ENCODE measurements at regions of chr18 and their contacts with region 1.

Region 1: DNA sequence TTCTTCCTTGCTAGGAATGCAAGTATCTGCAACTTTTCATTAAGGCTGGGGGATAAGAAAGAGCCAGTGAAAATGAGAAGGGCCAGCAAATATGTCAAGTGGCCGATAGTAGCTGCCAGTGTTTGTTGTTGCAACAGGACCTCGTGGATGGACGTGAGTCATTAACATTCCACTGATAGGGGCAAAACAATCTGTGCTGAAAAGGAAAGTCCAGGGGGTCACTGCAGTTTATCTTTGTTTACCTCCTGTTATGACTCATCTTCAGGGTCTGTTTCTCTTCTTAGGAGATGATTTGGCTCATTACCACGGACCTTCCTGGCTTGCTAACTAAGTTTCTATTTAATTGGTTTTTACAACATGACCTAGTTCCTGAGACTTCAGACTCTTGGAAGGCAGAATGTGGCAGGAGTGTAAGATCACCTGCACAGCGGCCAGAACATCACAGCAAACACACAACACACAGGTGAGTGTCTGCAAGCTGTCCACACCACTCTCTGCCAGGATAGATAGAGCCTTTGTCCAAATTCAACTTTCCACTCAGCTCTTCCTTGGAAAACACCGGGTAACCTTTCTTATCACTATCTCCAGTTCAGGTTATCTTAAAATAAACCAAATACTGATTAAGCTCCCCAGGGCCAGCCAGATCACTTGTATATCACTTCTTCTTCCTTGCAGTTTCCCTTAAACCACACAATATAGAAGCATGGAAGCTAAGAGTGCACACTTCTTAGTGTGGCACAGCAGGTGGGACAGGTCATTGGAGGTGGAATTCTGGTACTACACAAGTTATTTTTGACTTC is 157.5 kb upstream of the LMAN1 start:
- DNase-seq: no peak
- H3K4me3 ChIP-seq: no peak overlapping the region
- H3K27ac ChIP-seq: no peak overlapping the region
- H3K4me1 ChIP-seq: no peaks in the 10 kb centered on the region
- H3K27me3 ChIP-seq: no peaks in the 10 kb centered on the region
- CTCF ChIP-seq: no peak
- POLR2A ChIP-seq: no peak

Region 2: DNA sequence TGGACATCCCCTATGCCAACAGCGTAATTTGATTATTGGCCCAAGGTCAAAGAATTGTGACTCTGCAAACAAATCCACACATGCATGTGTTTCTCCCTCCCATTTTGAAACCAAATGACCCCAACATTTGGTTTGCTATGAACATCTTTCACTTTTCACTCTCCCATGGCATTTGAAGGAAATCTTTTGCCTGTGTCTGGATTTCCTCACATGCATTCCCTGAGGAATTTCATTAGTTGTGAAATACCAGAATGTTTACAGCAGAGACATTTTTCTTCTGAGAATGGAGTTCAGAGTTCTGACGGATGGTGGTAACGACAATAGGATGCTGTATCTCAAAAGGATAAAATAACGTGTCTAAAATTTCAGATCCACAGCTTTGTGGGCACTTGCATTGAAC is 97.2 kb before region 1 on chr18:
- intact Hi-C with region 1: no loop called
- DNase-seq: no peak
- H3K4me3 ChIP-seq: no peak overlapping the region
- H3K27ac ChIP-seq: no peak overlapping the region
- H3K4me1 ChIP-seq: no peaks in the 10 kb centered on the region
- H3K27me3 ChIP-seq: peaks cover 4% of the 10 kb centered on the region
- CTCF ChIP-seq: no peak
- POLR2A ChIP-seq: no peak

Region 3: DNA sequence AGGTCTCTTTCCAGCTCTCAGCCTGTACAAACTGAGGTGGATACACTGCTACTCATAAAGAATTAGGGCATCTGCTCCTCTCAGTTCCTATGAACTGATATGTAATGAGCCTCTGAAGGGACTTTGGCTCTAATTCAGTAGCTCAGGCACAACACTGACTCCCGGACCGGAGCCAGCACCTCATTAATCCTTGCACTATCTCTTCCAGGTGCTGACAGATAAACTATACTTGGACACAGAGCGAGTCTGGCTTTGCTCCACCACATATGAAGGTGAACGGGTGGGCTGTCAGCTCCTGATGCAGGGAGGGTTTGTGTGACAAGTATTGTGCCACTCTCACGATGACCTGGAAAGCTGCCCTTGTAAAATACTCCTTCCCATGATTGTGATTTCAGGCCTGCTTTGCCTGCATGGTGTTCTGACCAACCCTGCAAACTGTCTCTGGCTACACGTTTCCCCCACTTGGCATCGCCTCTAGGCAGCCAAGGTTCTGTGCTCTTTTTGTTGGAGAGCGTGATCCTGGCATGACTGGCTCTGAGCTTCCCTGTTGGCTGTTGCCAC is 45.9 kb before region 1 on chr18:
- intact Hi-C with region 1: loop called (anchors 5 kb)
- DNase-seq: peak; percentile 12
- H3K4me3 ChIP-seq: no peak overlapping the region
- H3K27ac ChIP-seq: no peak overlapping the region
- H3K4me1 ChIP-seq: no peaks in the 10 kb centered on the region
- H3K27me3 ChIP-seq: no peaks in the 10 kb centered on the region
- CTCF ChIP-seq: no peak
- POLR2A ChIP-seq: no peak

Region 4: GRCh38 chr18:59566533-59566971 is 50.0 kb after region 1 on chr18:
- intact Hi-C with region 1: loop called (anchors 10 kb)
- DNase-seq: no peak
- H3K4me3 ChIP-seq: no peak overlapping the region
- H3K27ac ChIP-seq: no peak overlapping the region
- H3K4me1 ChIP-seq: no peaks in the 10 kb centered on the region
- H3K27me3 ChIP-seq: no peaks in the 10 kb centered on the region
- CTCF ChIP-seq: no peak
- POLR2A ChIP-seq: no peak

Measured in prostate gland (tissue), 2 donors.